ENCODE measurements at regions of chr4 and their contacts with region 1.

Region 1: GRCh38 chr4:173301518-173302201 is 32.5 kb downstream of the HMGB2 start:
- DNase-seq: peak; percentile 34
- ATAC-seq: no peak
- H3K4me3 ChIP-seq: no peak overlapping the region
- H3K4me3 Mint-ChIP-seq: no peak overlapping the region
- H3K27ac ChIP-seq: no peak overlapping the region
- H3K27ac Mint-ChIP-seq: no peak overlapping the region
- H3K4me1 ChIP-seq: no peaks in the 10 kb centered on the region
- H3K4me1 Mint-ChIP-seq: peaks cover 2% of the 10 kb centered on the region
- H3K27me3 ChIP-seq: no peaks in the 10 kb centered on the region
- H3K27me3 Mint-ChIP-seq: no peaks in the 10 kb centered on the region
- CTCF ChIP-seq: peak; percentile 85

Region 2: DNA sequence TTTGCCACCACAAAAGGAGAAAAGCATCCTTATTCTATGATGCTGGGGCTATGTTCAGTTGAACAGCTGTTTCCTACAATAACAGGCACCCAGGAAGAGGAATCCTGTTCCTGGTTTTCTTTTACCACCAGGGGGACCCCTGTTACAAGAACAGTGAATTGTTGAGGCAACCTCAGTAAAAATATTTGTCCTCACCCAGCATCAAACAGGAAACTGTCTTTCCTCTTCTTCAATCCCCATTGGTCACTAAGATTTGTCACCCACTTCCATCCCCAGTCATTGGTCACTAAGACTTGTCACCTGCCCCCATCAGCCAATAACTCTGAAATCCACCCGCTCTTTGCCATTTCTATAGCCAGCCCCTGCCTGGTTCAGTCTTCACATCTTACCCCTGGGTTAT is 276.5 kb before region 1 on chr4:
- CTCF ChIA-PET with region 1: interaction called, 27 read pairs
- POLR2A ChIA-PET with region 1: no interaction called
- intact Hi-C with region 1: loop called (anchors 5 kb)
- DNase-seq: peak; percentile 51
- ATAC-seq: peak; percentile 31
- H3K4me3 ChIP-seq: no peak overlapping the region
- H3K4me3 Mint-ChIP-seq: no peak overlapping the region
- H3K27ac ChIP-seq: no peak overlapping the region
- H3K27ac Mint-ChIP-seq: no peak overlapping the region
- H3K4me1 ChIP-seq: no peaks in the 10 kb centered on the region
- H3K4me1 Mint-ChIP-seq: no peaks in the 10 kb centered on the region
- H3K27me3 ChIP-seq: no peaks in the 10 kb centered on the region
- H3K27me3 Mint-ChIP-seq: peaks cover 2% of the 10 kb centered on the region
- CTCF ChIP-seq: peak; percentile 64

Region 3: DNA sequence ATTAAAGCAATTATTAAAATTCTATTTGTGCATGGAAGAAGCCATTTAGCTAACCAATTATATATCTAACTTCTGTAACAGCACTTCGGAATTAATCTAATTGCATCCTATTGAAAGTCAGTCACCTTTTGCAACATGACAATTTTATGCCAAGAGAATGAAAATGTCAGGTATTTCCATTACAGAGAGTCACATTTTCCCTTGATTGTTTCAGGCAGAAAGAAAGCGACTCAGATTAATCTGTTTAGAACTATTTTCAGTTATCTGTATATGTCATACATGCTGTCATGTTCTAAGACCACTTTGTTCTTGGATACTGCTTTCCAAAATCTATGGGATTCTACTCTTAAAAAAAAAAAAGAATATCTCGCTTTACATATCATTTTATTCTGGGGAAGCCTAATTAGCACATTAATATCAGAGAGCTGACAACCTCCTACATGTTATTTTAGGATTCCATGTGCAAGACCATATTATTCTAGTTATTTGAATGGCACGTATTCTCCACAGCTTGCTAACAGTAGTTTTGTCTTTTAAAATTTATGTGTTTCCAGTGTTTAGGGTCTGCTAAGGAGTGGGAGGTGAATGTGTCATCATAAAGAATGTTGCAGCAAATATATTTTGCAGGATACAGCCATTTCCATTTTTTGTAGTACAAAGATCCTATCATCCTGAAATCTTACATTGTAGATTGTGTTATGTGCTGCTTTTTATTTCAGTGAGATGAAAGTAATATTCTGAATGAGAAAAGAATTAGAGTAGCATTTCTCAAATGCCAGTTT is 101.4 kb before region 1 on chr4:
- CTCF ChIA-PET with region 1: no interaction called
- POLR2A ChIA-PET with region 1: no interaction called
- intact Hi-C with region 1: no loop called
- DNase-seq: no peak
- ATAC-seq: no peak
- H3K4me3 ChIP-seq: no peak overlapping the region
- H3K4me3 Mint-ChIP-seq: no peak overlapping the region
- H3K27ac ChIP-seq: no peak overlapping the region
- H3K27ac Mint-ChIP-seq: no peak overlapping the region
- H3K4me1 ChIP-seq: peaks cover 3% of the 10 kb centered on the region in 2 donors
- H3K4me1 Mint-ChIP-seq: peaks cover 9% of the 10 kb centered on the region
- H3K27me3 ChIP-seq: no peaks in the 10 kb centered on the region
- H3K27me3 Mint-ChIP-seq: no peaks in the 10 kb centered on the region
- CTCF ChIP-seq: no peak

Measured in B cell (primary cell).